BJ (cell line): ENCODE measurements at regions of chr16 and their contacts with region 1.

Region 1: DNA sequence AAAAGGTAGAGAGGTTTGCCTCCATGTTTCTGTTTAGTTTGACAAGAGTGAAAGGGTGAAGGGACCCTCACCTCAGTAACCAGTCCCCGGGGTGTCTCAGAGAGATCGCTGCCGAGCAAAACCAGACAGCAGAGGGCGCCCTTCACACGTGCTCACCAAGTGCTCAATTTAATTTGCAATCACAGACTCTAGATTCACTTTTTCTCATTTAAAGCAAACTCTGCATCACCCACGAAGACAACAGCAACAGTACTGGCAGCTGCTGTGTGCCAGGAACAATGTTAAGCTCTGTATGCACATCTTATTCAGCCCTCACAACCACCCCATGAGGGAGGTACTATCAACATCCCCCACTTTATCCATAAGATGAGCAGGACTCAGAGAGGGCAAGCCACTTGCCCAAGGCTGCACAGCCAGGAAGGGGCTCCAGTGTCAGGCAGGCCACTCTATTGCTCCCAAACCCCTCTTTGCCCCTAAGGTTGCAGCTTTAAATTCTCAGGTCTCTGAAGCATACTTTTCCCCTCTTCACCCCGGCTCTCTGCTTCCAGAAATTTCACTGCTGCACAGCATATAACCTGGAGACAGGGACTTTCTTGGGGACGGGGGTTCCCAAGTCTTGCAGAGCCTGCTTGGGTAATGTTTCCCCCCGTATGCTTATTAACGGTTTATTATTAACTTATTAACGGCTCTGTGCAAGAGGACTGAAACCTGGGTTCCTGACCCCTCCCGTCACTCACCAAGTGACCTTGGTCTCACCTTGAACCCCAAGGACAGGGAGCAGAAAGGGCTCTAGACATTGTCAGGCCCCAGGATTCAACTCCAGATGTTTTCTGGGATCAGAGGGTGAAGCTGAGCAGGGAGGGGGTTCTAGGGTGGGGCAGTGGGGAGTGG is 70.9 kb downstream of the CNGB1 start:
- DNase-seq: no peak
- H3K4me3 ChIP-seq: no peak overlapping the region
- H3K27me3 ChIP-seq: peaks cover 2% of the 10 kb centered on the region; the same call in 1 of the 2 replicates
- CTCF ChIP-seq: peak; percentile 90

Region 2: DNA sequence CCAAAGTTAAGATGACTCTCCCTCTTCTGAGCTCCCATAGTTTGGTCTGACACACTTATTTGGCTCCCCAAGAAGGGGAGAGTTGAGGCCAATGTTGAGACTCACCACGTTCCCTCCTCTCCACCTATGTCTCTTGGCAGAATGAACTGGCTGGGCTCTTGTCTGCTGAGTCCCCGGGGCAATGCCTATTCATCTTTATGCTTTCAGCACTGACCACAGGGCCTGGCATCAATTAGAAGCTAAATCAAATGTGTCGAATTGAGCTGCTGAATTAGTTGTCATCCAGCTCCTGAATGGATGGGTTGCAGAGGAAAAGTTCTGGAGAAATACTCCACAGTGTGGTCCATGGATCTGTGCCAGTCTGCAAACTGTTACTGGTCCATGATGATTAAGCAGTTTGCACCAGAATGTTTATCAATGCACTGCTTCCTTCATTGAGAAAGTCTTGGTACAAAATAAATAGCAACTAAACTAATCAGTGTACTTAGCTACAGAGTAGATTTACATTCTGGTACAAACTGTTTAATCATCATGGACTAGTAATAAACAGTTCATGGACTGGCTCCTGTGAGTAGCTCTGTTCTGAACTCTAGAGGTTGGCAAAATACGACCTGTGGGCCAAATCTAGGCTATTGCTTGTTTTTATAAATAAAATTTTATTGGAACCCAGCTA is 66.3 kb after region 1 on chr16:
- CTCF ChIA-PET with region 1: no interaction called
- POLR2A ChIA-PET with region 1: no interaction called
- DNase-seq: no peak
- H3K4me3 ChIP-seq: no peak overlapping the region
- H3K27me3 ChIP-seq: peaks cover 12% of the 10 kb centered on the region
- CTCF ChIP-seq: no peak

Region 3: GRCh38 chr16:58000706-58001676 is 101.0 kb after region 1 on chr16 and contains the start of gene USB1:
- CTCF ChIA-PET with region 1: interaction called, 63 read pairs
- POLR2A ChIA-PET with region 1: no interaction called
- DNase-seq: no peak
- H3K4me3 ChIP-seq: peak within 1 kb of the TSS; percentile 72
- H3K27me3 ChIP-seq: no peaks in the 10 kb centered on the region
- CTCF ChIP-seq: peak; percentile 48
- polyA plus RNA-seq, gene USB1: 48.7 and 86.2 TPM in 2 replicates